Natural killer cell (primary cell): ENCODE measurements at regions of chr5 and their contacts with region 1.

Region 1: DNA sequence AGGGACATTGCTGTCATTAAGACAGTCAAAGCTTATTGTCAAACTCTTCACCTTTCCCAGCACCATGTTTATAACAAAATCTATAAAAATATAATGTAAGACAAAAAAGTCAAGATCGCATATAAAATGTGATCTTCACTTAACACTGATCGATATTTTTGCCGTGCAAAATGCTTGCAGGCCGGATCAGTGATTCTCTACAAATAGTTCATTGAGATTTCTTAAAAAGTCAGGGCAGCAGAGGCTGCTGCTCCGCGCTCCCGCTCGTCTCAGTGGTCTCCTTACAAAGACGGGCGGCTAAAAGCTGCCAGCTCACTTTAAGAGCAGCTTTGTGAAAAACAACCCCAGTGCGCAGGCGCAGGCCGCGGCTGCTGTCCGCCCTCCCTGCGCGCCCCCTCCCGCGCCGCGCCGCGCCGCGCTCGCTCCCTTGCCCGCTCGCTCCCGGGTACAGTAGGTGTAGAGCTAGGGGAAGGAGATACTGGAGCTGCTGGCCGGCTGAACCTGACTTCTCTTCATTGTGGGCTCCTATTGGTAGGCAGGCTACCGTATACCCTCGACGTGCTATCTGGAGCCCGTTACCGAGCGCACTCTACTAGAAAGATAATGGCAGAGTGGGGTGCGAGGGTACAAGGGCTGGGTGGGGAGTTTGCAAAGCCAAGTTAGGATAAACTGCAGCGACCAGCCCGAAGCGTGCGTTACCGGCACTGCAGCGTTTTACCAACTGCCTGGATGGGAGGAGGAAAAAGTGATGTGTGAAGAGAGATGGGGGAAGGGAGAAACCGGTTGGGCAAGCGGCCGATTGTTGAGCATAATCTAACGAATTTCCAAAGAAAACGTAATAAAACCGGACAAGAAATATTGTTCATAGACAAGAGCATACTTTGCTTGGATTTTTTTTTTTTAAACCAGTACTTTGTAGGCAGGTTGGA is at the start of gene ARRDC3:
- DNase-seq: peak; percentile 96 to 98
- ATAC-seq: peak; percentile 30 to 61 (median 33)
- H3K4me3 ChIP-seq: peak within 1 kb of the TSS; percentile 82
- H3K4me3 Mint-ChIP-seq: peak within 1 kb of the TSS; percentile 99
- H3K27ac ChIP-seq: peak within 1 kb of the TSS; percentile 97
- H3K27ac Mint-ChIP-seq: peak within 1 kb of the TSS; percentile 100
- H3K4me1 ChIP-seq: no peaks in the 10 kb centered on the region
- H3K4me1 Mint-ChIP-seq: peaks cover 32 to 35% of the 10 kb centered on the region in 2 donors
- H3K27me3 ChIP-seq: no peaks in the 10 kb centered on the region
- H3K27me3 Mint-ChIP-seq: no peaks in the 10 kb centered on the region
- CTCF ChIP-seq: no peak
- total RNA-seq, gene ARRDC3: 117 to 375 (median 133) TPM

Region 2: GRCh38 chr5:90529194-90529938 is 853.9 kb before region 1 on chr5 and contains the start of gene LYSMD3:
- intact Hi-C with region 1: loop called (anchors 5 kb)
- DNase-seq: peak; percentile 97 to 98
- ATAC-seq: peak; percentile 88 to 98 (median 91)
- H3K4me3 ChIP-seq: peak within 1 kb of the TSS; percentile 89
- H3K4me3 Mint-ChIP-seq: peak within 1 kb of the TSS; percentile 95
- H3K27ac ChIP-seq: peak within 1 kb of the TSS; percentile 93
- H3K27ac Mint-ChIP-seq: peak within 1 kb of the TSS; percentile 90 to 93
- H3K4me1 ChIP-seq: peaks cover 12% of the 10 kb centered on the region
- H3K4me1 Mint-ChIP-seq: peaks cover 21 to 37% of the 10 kb centered on the region in 2 donors
- H3K27me3 ChIP-seq: peaks cover 10% of the 10 kb centered on the region
- H3K27me3 Mint-ChIP-seq: peaks cover 19 to 35% of the 10 kb centered on the region in 2 donors
- CTCF ChIP-seq: no peak
- total RNA-seq, gene LYSMD3: 15.2 to 27.9 (median 19.5) TPM

Region 3: DNA sequence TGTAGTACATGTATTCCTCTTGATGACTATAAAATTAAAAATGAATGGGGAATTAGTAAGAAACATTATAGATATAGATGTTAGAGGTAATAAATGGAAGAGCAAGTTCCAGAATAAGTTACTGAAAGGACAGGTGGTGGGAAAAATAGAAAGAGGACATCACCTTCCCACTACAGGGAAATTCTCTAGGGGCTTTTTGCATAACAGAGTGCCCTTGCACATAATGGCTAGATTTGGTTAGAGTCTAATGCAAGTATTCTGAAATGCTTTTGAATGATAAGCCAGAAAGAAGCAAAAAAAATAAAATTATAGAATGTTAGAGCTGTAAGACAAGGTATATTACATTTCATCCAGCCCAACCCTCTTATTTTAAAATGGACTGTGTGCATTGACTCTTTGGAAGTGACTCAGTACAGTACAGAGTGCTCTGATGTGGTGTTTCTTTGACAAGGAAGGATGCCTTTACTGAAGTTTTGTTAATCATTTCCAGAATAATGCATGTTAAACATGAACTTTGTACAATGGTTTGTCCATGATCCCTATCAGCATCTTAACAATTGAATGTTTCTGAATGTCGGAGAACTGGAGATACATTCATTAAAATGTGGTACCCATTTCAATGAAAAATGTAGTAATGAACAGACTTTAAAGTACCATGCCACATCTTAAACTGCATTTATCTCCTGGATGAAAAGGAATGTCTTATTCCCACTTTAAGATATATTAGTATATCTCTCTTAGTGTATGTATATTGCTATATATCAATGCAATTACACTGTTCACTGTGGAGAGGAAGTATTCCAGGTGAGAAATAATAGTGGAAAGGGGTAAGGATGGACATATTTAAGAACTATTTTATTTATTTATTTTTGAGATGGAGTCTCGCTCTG is 433.6 kb before region 1 on chr5:
- intact Hi-C with region 1: no loop called
- DNase-seq: no peak
- ATAC-seq: no peak
- H3K4me3 ChIP-seq: no peak overlapping the region
- H3K4me3 Mint-ChIP-seq: no peak overlapping the region
- H3K27ac ChIP-seq: no peak overlapping the region
- H3K27ac Mint-ChIP-seq: no peak overlapping the region
- H3K4me1 ChIP-seq: no peaks in the 10 kb centered on the region
- H3K4me1 Mint-ChIP-seq: no peaks in the 10 kb centered on the region
- H3K27me3 ChIP-seq: no peaks in the 10 kb centered on the region
- H3K27me3 Mint-ChIP-seq: peaks cover 6 to 41% of the 10 kb centered on the region in 2 donors
- CTCF ChIP-seq: no peak

Region 4: GRCh38 chr5:91101600-91102379 is 281.5 kb before region 1 on chr5:
- intact Hi-C with region 1: loop called (anchors 1 kb)
- DNase-seq: peak; percentile 49 to 72
- ATAC-seq: peak; percentile 95 to 100 (median 99)
- H3K4me3 ChIP-seq: no peak overlapping the region
- H3K4me3 Mint-ChIP-seq: no peak overlapping the region
- H3K27ac ChIP-seq: no peak overlapping the region
- H3K27ac Mint-ChIP-seq: no peak overlapping the region
- H3K4me1 ChIP-seq: no peaks in the 10 kb centered on the region
- H3K4me1 Mint-ChIP-seq: peaks cover 8 to 9% of the 10 kb centered on the region in 2 donors
- H3K27me3 ChIP-seq: no peaks in the 10 kb centered on the region
- H3K27me3 Mint-ChIP-seq: peaks cover 8 to 12% of the 10 kb centered on the region in 2 donors
- CTCF ChIP-seq: peak; percentile 63

Region 5: GRCh38 chr5:91219803-91220371 is 163.4 kb before region 1 on chr5:
- intact Hi-C with region 1: loop called (anchors 1 kb)
- DNase-seq: peak in 1 of 2 donors; percentile 57
- ATAC-seq: peak in 2 of 3 donors; percentile 60 to 73
- H3K4me3 ChIP-seq: no peak overlapping the region
- H3K4me3 Mint-ChIP-seq: no peak overlapping the region
- H3K27ac ChIP-seq: no peak overlapping the region
- H3K27ac Mint-ChIP-seq: peak overlapping the region in 1 of 2 donors; percentile 29
- H3K4me1 ChIP-seq: no peaks in the 10 kb centered on the region
- H3K4me1 Mint-ChIP-seq: peaks cover 6% of the 10 kb centered on the region in 2 donors
- H3K27me3 ChIP-seq: no peaks in the 10 kb centered on the region
- H3K27me3 Mint-ChIP-seq: peaks cover 4 to 9% of the 10 kb centered on the region in 2 donors
- CTCF ChIP-seq: peak; percentile 21

Region 6: DNA sequence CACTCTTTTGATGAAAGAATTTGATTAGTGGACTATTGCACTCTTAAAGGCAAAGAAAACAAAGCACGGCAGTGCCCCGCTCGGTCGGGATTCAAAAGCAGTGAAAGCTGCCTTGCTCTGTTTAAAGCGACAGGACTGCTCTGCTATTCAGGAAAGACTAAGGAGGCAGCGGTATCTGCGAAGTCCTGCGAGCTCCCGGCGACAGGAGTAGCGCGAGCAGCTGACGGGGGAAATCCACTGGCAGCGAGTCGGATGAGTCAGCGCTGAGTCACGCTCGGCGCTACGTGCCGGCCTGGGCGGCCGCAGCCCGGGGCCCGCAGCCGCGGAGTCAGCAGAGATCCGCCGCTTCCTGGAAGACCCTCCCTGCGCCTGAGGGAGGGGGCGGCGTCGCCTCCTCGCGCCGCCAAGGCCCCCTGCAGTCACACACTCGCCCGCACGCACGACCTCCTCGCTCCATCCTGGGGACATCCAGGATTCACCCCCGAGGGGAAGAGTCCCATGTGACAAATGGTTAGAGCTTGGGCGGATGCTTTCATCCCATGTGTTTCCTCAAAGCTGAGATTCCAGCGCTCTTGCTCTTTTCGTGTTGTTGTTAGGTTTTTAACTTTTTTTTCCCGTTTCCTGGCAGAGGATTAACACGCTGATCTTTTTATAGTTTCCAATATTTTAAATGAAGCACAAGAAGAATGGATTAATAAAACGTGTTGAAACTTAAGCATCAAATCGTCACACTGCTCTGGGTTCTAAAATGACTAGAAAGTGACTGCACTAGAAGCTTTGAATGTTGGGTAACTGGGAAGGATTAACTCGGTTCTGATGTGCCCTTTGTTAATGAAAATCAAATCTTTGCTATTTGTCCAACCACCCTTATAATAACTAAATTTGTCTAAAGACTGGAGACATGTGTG is 102.7 kb before region 1 on chr5:
- intact Hi-C with region 1: loop called (anchors 1 kb)
- DNase-seq: peak; percentile 89 to 94
- ATAC-seq: peak; percentile 85 to 95 (median 92)
- H3K4me3 ChIP-seq: peak overlapping the region; percentile 57
- H3K4me3 Mint-ChIP-seq: peak overlapping the region; percentile 98
- H3K27ac ChIP-seq: peak overlapping the region; percentile 52
- H3K27ac Mint-ChIP-seq: peak overlapping the region; percentile 95
- H3K4me1 ChIP-seq: peaks cover 16% of the 10 kb centered on the region
- H3K4me1 Mint-ChIP-seq: peaks cover 20 to 25% of the 10 kb centered on the region in 2 donors
- H3K27me3 ChIP-seq: peaks cover 2% of the 10 kb centered on the region
- H3K27me3 Mint-ChIP-seq: peaks cover 0 to 7% of the 10 kb centered on the region in 2 donors
- CTCF ChIP-seq: no peak

Region 7: DNA sequence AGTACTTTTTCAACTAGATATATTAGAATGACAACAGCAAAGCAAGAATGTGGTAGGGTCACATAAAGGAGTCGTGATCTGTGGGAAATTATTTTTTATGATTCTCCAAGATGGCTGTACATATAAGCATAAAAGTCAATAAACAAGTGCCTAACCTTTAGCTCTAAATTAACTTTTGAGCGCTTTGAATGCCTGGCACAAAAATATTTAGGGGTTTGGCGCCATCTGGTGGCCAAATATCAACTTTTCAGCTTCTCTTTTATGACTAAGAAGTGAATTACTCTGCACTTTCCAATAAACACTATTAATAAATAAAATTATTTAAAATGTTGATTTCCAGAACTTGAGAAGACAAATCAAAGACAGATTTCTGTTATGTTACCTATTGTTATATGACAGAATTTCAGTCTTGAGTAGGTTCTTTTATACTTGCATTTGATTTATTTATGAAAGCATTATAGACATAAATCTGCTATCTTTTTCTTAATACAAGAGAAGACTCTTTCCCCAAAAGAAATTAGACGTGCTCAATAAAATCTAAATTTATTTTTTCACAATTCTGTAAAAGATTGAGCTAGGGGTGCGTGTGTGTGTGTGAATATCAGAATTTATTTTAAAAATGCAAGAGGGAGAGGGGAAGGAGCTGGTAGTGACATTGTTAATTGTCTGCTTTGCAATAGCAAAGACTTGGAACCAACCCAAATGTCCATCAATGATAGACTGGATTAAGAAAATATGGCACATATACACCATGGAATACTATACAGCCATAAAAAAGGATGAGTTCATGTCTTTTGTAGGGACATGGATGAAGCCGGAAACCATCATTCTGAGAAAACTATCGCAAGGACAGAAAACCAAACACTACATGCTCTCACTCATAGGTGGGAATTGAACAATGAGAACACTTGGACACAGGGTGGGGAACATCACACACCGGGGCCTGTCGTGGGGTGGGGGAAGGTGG is 36.6 kb after region 1 on chr5:
- intact Hi-C with region 1: loop called (anchors 2 kb)
- DNase-seq: peak; percentile 67 to 86
- ATAC-seq: peak; percentile 64 to 82 (median 68)
- H3K4me3 ChIP-seq: no peak overlapping the region
- H3K4me3 Mint-ChIP-seq: peak overlapping the region; percentile 47
- H3K27ac ChIP-seq: no peak overlapping the region
- H3K27ac Mint-ChIP-seq: no peak overlapping the region
- H3K4me1 ChIP-seq: no peaks in the 10 kb centered on the region
- H3K4me1 Mint-ChIP-seq: peaks cover 26 to 29% of the 10 kb centered on the region in 2 donors
- H3K27me3 ChIP-seq: no peaks in the 10 kb centered on the region
- H3K27me3 Mint-ChIP-seq: no peaks in the 10 kb centered on the region
- CTCF ChIP-seq: peak; percentile 88

Region 8: GRCh38 chr5:93305984-93306383 is 1922.7 kb after region 1 on chr5:
- intact Hi-C with region 1: no loop called
- DNase-seq: no peak
- ATAC-seq: no peak
- H3K4me3 ChIP-seq: no peak overlapping the region
- H3K4me3 Mint-ChIP-seq: no peak overlapping the region
- H3K27ac ChIP-seq: no peak overlapping the region
- H3K27ac Mint-ChIP-seq: no peak overlapping the region
- H3K4me1 ChIP-seq: no peaks in the 10 kb centered on the region
- H3K4me1 Mint-ChIP-seq: no peaks in the 10 kb centered on the region
- H3K27me3 ChIP-seq: no peaks in the 10 kb centered on the region
- H3K27me3 Mint-ChIP-seq: no peaks in the 10 kb centered on the region
- CTCF ChIP-seq: no peak